Activated T-helper 1 cell treated with anti-CD3 and anti-CD28 coated beads, Interleukin-12 subunit alpha, Interleukin-12 subunit beta, Interleukin-2, Interleukin-4 antibody, amounts not matched to agents 30 ng/mL and 10 ng/mL and 1 ng/mL, durations not matched to agents 14 hours and 24 hours and 36 hours (primary cell): ENCODE measurements at regions of chr9 and their contacts with region 1.

Region 1: DNA sequence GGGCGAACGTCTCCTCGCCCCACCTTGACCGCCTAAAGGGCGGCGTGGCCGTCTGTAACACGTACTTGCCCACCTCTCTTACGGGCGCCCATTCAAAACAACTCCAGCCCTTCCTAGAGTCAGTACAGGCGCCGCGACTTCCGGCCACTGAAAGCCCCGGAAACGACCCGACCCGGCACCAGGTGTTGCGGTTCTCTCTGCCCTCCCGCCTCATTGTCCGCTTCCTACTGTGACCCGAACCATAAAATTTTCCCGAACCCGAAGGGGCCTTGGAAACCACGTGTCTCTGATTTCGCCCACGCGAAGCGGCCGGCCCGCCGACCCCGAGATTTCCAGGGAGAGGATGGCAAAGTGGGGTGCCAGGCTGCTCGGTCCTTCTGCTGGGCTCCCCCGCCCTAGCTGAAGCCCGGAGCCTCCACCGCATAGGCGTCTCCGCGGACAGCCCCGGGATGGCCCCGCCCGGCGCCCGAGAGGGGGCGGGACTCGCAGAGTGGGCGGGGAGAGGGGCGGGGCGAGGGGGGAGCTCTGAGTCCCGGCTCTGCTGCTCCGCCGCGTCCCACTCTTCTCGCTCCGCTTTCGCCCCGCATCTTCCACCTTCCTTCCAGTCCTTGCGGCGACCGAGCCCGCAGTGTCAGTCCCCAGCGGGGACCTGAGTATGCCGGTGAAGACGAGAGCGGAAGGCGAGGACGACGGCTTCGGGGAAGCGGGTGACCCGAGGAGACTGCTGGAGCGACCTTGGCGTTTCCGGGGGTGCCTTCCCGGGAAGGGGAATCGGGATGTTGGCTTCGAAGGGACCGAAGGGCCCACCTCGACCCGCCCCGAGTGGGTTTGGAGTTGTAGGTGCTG is 684 bp upstream of the PTGES2 start:
- DNase-seq: peak; percentile 79
- H3K4me3 Mint-ChIP-seq: peak overlapping the region; percentile 90
- H3K27ac Mint-ChIP-seq: peak overlapping the region; percentile 99
- H3K4me1 Mint-ChIP-seq: peaks cover 39% of the 10 kb centered on the region
- H3K27me3 Mint-ChIP-seq: peaks cover 19% of the 10 kb centered on the region

Region 2: GRCh38 chr9:127937388-127938280 is 190.6 kb before region 1 on chr9 and contains the start of gene DPM2:
- intact Hi-C with region 1: loop called (anchors 1 kb)
- DNase-seq: peak; percentile 82
- H3K4me3 Mint-ChIP-seq: peak within 1 kb of the TSS; percentile 92
- H3K27ac Mint-ChIP-seq: peak within 1 kb of the TSS; percentile 91
- H3K4me1 Mint-ChIP-seq: peaks cover 37% of the 10 kb centered on the region
- H3K27me3 Mint-ChIP-seq: peaks cover 2% of the 10 kb centered on the region
- total RNA-seq, gene DPM2: 62.6 and 70.2 TPM in 2 replicates

Region 3: DNA sequence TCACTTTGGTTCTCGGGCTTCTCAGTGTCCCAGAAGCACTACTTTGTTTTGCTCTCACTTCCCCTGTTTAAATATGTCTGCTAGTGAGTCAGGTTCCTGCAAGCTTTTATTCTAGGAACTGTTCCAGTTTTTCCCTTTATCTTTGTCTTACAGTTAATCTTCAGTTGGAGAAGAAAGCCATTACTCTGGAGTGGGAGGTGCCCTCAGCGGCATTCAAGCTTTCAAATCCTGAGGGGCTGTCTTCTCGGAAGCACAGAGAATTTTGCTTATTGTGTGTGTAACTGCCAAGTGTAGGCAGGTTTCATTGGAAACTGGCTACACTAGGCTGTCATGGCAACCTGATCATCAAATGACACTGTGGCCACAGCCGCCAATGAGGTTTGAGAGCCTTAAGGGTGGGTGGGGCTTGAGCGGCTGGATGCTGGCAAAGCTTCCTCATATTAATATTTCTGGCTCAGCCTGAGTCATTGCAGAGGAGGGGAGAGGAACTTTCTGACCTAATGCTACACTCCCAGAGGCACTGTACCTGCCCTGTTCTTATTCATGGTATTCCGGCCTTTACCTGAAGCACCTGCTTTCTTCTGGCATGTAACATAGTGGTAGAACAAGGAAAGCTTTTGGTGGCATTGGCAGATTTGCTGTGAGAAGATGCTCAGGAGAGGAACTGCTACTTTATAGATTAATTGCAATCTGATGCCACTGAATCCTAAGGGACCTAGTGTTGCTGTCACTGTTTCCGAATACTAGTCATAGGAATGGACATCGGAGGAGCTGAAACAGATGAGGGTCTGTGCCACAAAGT is 33.8 kb before region 1 on chr9:
- intact Hi-C with region 1: loop called (anchors 1 kb)
- DNase-seq: peak; percentile 79
- H3K4me3 Mint-ChIP-seq: peak overlapping the region; percentile 70
- H3K27ac Mint-ChIP-seq: peak overlapping the region; percentile 95
- H3K4me1 Mint-ChIP-seq: peaks cover 48% of the 10 kb centered on the region
- H3K27me3 Mint-ChIP-seq: no peaks in the 10 kb centered on the region

Region 4: DNA sequence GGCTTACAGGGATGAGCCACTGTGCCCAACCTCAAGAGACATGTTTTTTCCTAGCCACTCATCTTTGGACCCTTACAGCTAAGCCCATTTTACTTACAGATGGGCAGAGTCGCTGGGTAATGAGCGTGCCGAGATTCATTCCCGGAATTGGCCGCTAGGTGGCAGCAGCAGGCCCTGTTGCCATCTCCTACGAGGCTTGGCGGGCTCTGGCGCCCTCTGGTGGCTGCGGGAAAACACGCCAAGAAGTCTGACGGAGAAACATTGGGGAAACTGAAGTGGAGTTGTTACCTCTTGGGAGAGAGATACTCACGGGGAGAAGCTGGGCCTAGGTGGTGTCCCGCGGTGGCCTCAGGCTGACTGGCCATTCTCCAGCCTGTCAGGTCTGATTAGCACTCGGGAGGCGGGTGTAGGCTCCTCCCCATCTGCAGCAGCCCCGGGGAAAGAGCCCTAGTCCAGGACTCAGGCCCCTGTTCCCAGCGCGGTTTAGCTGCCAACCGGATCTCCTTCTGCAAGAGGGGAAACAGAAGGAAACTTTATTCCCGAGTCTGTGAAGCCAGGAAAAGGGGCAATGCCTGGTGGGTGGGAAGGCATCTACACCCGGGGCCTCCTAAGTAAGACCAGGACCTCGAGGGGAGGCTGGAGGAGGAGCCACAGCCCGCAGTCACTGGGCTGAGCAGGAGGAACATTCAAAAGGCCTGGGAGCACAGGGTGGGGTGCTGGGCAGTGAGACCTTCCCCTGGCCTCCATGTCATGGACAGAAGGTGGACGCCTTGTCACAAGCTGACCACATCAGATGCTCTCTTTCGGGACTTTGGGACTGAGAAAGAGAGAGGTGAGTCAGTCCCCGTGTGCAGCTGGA is 10.4 kb before region 1 on chr9:
- intact Hi-C with region 1: loop called (anchors 1 kb)
- DNase-seq: peak; percentile 88
- H3K4me3 Mint-ChIP-seq: no peak overlapping the region
- H3K27ac Mint-ChIP-seq: peak overlapping the region; percentile 66
- H3K4me1 Mint-ChIP-seq: peaks cover 12% of the 10 kb centered on the region
- H3K27me3 Mint-ChIP-seq: no peaks in the 10 kb centered on the region

Region 5: DNA sequence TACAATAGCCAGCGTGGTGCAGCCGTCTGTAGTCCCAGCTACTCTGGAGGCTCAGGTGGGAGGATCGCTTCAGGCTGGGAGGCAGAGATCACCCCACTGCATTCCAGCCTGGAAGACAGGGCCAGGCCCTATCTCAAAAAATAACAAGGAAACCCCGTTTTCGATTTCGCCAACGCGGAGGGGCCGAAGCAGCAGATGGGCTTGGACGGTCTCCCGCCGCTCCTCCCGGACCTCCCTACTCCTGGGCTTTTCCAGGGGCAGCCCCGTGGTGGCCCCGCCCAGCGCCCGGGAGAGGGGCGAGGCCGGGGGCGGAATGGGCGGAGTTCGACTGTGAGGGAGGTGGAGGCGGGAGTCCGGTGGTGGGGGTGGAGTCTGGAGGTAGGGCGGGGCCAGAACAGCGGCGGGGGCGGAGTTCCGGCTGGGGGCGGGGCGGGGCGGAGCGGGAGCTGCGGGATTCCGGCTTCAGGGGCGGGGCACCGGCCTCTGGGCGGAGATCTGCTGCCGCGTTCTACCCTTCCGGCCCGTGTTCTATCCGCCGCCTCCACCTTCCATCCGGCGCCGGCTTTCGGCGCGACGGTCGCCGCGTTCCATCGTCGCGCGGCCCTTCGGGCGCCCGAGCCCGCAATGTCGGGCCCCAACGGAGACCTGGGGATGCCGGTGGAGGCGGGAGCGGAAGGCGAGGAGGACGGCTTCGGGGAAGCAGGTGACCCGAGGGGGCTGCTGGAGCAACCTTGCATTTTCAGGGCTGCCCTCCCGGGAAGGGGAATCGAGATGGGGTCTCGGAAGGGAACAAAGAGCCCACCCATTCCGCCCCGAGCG is 31.8 kb after region 1 on chr9 and contains the start of gene BBLN:
- intact Hi-C with region 1: loop called (anchors 1 kb)
- DNase-seq: peak; percentile 88
- H3K4me3 Mint-ChIP-seq: peak within 1 kb of the TSS; percentile 84
- H3K27ac Mint-ChIP-seq: peak within 1 kb of the TSS; percentile 93
- H3K4me1 Mint-ChIP-seq: peaks cover 14% of the 10 kb centered on the region
- H3K27me3 Mint-ChIP-seq: peaks cover 2% of the 10 kb centered on the region
- total RNA-seq, gene BBLN: 97.3 and 106 TPM in 2 replicates

Region 6: GRCh38 chr9:128191406-128192046 is 63.3 kb after region 1 on chr9 and contains the start of gene CIZ1:
- intact Hi-C with region 1: loop called (anchors 2 kb)
- DNase-seq: peak; percentile 69
- H3K4me3 Mint-ChIP-seq: peak within 1 kb of the TSS; percentile 98
- H3K27ac Mint-ChIP-seq: peak within 1 kb of the TSS; percentile 96
- H3K4me1 Mint-ChIP-seq: peaks cover 23% of the 10 kb centered on the region
- H3K27me3 Mint-ChIP-seq: no peaks in the 10 kb centered on the region
- total RNA-seq, gene CIZ1: 154 and 158 TPM in 2 replicates

Region 7: DNA sequence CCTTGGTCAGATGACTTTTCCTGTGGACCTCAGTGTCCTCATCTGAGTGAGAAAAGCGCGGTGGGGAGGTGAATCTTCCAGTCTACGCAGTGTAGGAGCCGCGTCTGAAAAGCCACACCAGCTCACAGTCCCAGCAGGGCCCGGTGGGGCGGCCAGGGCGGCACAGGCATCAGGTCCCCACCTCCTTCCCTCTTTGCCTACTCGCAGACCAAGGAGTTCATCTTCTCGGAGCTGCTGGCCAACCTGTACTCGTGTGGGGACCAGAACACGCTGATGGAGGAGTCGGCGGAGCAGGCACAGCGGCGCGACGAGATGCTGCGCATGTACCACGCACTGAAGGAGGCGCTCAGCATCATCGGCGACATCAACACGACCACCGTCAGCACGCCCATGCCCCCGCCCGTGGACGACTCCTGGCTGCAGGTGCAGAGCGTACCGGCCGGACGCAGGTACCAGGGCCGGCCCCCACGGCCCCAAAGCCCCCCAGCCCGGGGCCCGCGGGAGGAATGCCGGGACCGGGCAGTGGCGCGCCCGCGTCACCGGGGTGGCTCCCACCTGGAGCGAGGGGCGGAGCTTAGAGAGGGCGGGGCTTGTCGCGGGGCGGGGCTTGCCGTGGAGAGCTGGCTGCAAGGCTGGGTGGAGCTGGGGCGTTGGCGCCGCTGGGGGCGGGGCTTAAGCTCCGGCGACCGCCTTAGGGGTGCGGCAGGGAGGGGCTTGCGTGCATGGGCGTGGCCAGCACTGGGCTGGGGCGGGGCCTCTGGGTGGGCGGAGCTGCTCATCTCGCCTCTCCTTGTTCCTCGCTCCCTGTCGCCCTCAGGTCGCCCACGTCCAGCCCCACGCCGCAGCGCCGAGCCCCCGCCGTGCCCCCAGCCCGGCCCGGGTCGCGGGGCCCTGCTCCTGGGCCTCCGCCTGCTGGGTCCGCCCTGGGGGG is 122.0 kb after region 1 on chr9:
- intact Hi-C with region 1: loop called (anchors 1 kb)
- DNase-seq: peak; percentile 94
- H3K4me3 Mint-ChIP-seq: peak overlapping the region; percentile 78
- H3K27ac Mint-ChIP-seq: no peak overlapping the region
- H3K4me1 Mint-ChIP-seq: peaks cover 5% of the 10 kb centered on the region
- H3K27me3 Mint-ChIP-seq: peaks cover 28% of the 10 kb centered on the region